ENCODE measurements at regions of chr16 and their contacts with region 1.

Region 1: DNA sequence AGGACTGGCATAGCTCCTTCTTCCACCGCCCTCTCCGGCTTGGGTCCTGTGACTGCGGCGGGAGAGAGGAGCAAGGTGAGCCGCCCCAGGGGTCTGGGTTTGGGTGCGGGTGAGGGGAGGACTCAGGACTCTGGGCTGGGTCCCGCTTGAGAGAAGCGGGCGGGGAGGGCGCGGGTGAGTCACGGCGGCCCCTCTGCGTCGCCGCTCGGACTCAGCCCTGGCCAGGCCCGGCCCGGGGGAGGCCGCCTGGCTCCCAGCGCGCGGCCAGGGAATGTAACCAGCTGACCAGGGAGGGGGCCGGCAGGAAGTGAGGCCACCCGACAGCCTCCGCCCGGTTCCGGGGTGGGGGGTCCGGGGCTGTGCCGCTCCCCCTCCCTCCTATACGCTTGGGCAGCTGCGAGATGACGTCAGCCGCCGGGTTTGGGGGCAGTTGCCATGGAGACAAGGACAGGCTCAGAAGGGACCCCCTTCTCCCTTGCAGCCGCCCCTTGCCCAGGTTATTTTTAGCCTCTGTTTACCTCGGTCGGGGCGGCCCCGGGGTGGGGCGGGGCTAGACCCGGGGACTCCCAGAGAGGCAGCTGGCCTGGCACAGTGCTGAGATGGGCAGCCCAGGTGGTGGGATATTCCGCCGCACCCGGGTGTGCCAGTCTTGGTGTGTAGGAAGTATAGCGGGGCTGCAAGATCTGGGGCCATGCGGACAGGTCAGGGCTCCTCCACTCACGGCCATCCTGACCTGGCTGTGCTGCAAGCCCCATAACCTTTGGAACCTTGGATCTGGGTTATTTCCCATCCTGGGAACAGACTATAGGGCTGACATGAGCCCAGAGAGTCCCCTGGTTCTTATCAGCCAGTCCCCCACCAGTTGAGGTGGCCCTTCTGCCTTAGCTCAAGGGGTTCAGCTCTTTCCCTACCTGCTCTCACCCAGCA is 1.6 kb downstream of the RIPOR1 start:
- DNase-seq: peak; percentile 35
- H3K4me3 ChIP-seq: peak overlapping the region; percentile 66 to 77
- H3K27ac ChIP-seq: peak overlapping the region; percentile 81 to 84
- H3K4me1 ChIP-seq: peaks cover 3% of the 10 kb centered on the region
- H3K27me3 ChIP-seq: no peaks in the 10 kb centered on the region
- CTCF ChIP-seq: no peak
- POLR2A ChIP-seq: peak; percentile 69

Region 2: DNA sequence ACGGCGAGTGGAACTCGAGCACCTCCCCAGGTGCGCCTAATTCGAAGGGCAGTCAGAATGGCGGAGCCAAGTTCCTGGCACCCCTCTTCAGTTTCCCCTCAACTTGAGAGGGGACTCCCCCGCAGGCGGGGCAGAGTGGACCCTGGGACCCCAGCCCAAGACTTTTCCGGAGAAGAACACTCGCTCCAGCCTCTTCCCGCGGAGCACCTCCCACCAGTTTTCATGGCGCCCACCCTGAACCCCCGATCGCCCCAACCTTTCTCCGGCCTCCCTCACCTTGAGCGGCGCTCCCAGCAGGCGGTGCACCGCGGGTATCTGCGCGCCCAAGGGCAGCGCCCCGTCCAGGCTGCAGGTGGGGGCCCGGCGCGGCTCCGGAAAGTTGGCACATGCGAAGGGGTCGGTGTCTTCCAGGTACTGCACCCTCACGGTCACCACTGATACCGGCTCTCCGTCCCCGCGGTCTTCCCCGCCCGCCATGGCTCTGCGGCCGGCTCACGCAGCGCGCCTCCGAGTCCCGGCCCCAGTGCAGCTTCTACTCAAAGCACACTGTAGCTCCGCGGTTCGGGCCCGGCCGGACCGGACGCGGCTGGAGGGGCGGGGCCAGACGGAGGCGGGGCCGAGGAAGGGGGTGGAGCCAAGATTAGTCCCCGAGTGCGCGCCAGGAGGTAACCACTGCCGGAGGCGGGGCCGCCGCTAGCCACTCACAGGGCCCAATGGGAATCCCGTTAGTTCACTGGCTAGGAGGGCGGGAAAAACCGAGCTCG is 283.2 kb before region 1 on chr16 and contains the start of gene FHOD1:
- intact Hi-C with region 1: no loop called
- DNase-seq: peak; percentile 97
- H3K4me3 ChIP-seq: peak within 1 kb of the TSS; percentile 61 to 70
- H3K27ac ChIP-seq: peak within 1 kb of the TSS; percentile 83 to 86
- H3K4me1 ChIP-seq: peaks cover 6% of the 10 kb centered on the region
- H3K27me3 ChIP-seq: peaks cover 4% of the 10 kb centered on the region
- CTCF ChIP-seq: peak in 1 of 4 experiments; percentile 24
- POLR2A ChIP-seq: peak; percentile 89
- total RNA-seq, gene FHOD1: 11.2 to 46.1 TPM

Region 3: GRCh38 chr16:67480833-67481560 is 49.3 kb before region 1 on chr16 and contains the start of gene ATP6V0D1:
- intact Hi-C with region 1: loop called (anchors 5 kb)
- DNase-seq: peak; percentile 97
- H3K4me3 ChIP-seq: peak within 1 kb of the TSS; percentile 88 to 90
- H3K27ac ChIP-seq: peak within 1 kb of the TSS; percentile 87 to 90
- H3K4me1 ChIP-seq: peaks cover 7% of the 10 kb centered on the region
- H3K27me3 ChIP-seq: no peaks in the 10 kb centered on the region
- CTCF ChIP-seq: peak; percentile 92 to 100 (median 96)
- POLR2A ChIP-seq: peak; percentile 89
- total RNA-seq, gene ATP6V0D1: 98.3 to 138 TPM

Region 4: DNA sequence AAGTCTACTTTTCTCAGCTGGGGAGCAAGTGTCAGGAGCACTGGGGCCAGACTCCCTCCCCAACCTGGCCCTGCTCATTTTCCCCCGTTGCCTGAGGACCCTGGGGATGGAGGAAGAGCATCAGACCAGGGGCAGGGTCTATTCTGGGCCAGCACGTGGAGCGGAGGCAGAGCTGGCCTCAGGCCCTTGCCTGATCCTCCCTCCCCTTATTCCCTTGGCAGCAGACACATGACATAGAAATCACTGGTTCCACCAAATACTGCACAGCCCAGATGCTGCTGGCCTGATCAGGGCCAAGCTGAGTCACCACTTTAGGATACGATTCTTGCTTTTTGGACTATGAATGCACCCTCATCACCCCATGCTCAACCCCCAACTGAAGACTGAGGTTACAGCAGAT is 31.2 kb before region 1 on chr16:
- intact Hi-C with region 1: no loop called
- DNase-seq: no peak
- H3K4me3 ChIP-seq: no peak overlapping the region
- H3K27ac ChIP-seq: no peak overlapping the region
- H3K4me1 ChIP-seq: no peaks in the 10 kb centered on the region
- H3K27me3 ChIP-seq: no peaks in the 10 kb centered on the region
- CTCF ChIP-seq: no peak
- POLR2A ChIP-seq: no peak

Region 5: DNA sequence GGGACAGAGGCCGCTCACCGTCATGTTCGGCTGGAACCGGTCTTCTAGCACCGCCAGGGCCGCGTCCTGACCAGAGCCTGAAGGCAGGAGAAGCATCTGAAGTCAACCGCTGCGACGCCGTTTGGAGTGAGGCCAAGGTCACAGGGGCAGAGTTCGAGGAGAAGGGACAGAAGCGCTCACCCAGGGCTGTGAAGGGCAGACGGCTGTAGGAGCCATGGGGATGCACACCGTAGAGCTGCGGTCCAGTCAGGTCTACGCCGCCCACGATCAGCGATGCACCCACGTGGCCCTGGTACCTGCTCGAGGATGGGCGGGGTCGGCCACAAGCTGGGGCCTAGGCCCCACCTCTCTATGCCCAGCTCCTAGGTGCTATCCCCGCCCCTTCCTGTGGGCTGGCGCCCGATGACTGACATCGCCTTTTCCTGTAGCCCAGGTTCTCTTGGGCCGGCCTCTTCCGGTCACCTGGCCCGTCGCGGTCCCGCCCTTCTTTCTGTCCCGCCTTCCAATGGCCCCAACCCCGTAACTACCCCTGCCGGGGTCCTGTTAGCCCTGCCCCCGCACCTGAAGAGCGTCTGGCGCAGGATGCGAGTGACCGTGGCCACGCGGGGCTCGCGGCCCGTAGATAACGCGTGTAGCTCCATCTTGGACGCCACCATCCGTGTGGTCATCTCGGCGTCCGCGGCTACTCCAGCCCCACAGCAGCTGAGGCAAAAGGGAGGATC is 405.3 kb after region 1 on chr16:
- intact Hi-C with region 1: loop called (anchors 10 kb)
- DNase-seq: peak; percentile 98
- H3K4me3 ChIP-seq: peak overlapping the region; percentile 66 to 94
- H3K27ac ChIP-seq: peak overlapping the region; percentile 91 to 95
- H3K4me1 ChIP-seq: peaks cover 14% of the 10 kb centered on the region
- H3K27me3 ChIP-seq: no peaks in the 10 kb centered on the region
- CTCF ChIP-seq: peak in 2 of 4 experiments; percentile 41 to 50
- POLR2A ChIP-seq: peak; percentile 85